Cardiac septum (tissue), 1 donor: ENCODE measurements at regions of chr12 and their contacts with region 1.

Region 1: GRCh38 chr12:2769871-2770533 is 24.8 kb upstream of the FKBP4 start:
- DNase-seq: no peak

Region 2: DNA sequence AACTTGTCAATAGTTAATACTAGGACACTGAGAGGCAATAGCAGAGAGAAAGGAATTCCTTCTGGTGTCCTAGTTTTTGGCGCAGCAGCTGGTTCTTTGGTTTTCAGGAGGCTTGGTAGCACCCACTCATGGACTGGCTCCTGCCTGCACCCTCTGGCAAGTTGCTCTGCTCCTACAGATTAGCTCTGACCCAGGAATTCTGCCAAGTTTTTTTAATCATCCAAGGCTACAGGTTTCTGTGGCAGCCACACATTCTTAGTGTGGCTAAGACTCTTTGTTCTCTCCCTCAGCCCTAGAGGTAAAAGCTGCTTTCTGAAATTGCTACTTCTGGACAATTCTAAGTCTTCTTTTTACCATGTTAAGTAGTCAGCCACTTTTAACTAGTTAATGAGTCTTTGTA is 47.2 kb before region 1 on chr12:
- intact Hi-C with region 1: no loop called
- DNase-seq: no peak

Region 3: DNA sequence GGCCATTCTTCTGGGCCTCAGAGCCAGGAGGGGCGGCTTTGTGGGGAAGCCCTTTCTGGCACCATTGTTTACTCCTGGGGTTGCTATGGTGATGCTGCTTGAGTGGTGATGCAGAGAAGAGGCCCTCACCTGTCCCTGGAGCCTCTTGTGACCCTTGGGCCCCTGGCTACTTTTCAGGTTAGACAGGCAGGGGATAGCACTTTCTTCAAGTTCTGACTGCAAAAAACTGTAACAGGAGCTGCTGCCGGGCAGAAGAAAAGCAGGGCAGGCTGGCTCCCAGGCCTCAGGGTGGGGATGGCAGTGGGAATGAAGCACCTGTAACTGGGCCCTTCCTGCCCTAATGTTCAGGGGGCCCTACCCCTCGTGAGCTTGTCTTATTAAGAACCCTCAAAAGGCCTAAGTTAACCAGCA is 87.0 kb after region 1 on chr12 and contains the start of gene TEX52:
- intact Hi-C with region 1: no loop called
- DNase-seq: no peak
- total RNA-seq, gene TEX52: not detected

Region 4: GRCh38 chr12:2925322-2925995 is 155.5 kb after region 1 on chr12:
- intact Hi-C with region 1: loop called (anchors 5 kb)
- DNase-seq: no peak